ENCODE measurements at regions of chr17 and their contacts with region 1.

Region 1: GRCh38 chr17:51371732-51372151 is 111.4 kb downstream of the UTP18 start:
- DNase-seq: peak in 6 of 9 experiments; percentile 17 to 71 (median 31)
- ATAC-seq: peak; percentile 38
- H3K4me3 ChIP-seq: no peak overlapping the region
- H3K4me3 Mint-ChIP-seq: no peak overlapping the region
- H3K27ac ChIP-seq: no peak overlapping the region
- H3K27ac Mint-ChIP-seq: no peak overlapping the region
- H3K4me1 ChIP-seq: peaks cover 10% of the 10 kb centered on the region
- H3K4me1 Mint-ChIP-seq: peaks cover 8% of the 10 kb centered on the region
- H3K27me3 ChIP-seq: peaks cover 0 to 4% of the 10 kb centered on the region in 2 experiments
- H3K27me3 Mint-ChIP-seq: peaks cover 4% of the 10 kb centered on the region
- CTCF ChIP-seq: peak; percentile 49

Region 2: DNA sequence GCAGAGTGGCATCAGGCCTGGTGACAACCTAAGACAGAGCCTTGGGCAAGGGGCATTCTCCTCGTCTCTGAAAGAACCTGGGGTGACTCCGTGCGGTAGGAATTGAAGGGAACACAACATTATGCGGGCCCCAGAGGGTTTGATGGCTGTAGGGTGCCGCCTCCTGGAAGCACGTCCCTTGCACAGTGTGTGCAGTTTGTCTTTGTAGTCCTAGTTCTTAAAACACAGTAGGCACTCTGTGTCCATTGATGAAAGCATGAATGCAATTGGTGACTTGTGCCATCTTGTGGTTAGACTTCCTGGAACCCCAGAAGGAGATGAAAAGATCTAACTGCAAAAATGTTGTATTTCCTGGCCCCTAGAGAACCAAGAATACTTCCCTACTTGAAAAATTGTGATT is 168.4 kb after region 1 on chr17:
- CTCF ChIA-PET with region 1: interaction called, 50 read pairs
- POLR2A ChIA-PET with region 1: no interaction called
- intact Hi-C with region 1: loop called (anchors 1 kb)
- DNase-seq: peak in 2 of 9 experiments; percentile 7 to 21
- ATAC-seq: no peak
- H3K4me3 ChIP-seq: no peak overlapping the region
- H3K4me3 Mint-ChIP-seq: no peak overlapping the region
- H3K27ac ChIP-seq: no peak overlapping the region
- H3K27ac Mint-ChIP-seq: no peak overlapping the region
- H3K4me1 ChIP-seq: no peaks in the 10 kb centered on the region
- H3K4me1 Mint-ChIP-seq: peaks cover 11% of the 10 kb centered on the region
- H3K27me3 ChIP-seq: no peaks in the 10 kb centered on the region
- H3K27me3 Mint-ChIP-seq: no peaks in the 10 kb centered on the region
- CTCF ChIP-seq: no peak

Region 3: GRCh38 chr17:51640108-51640622 is 268.4 kb after region 1 on chr17:
- CTCF ChIA-PET with region 1: interaction called, 15 read pairs
- POLR2A ChIA-PET with region 1: no interaction called
- intact Hi-C with region 1: loop called in 1 of 2 experiments (anchors 2 kb)
- DNase-seq: peak in 3 of 9 experiments; percentile 1 to 15 (median 2)
- ATAC-seq: no peak
- H3K4me3 ChIP-seq: no peak overlapping the region
- H3K4me3 Mint-ChIP-seq: no peak overlapping the region
- H3K27ac ChIP-seq: no peak overlapping the region
- H3K27ac Mint-ChIP-seq: no peak overlapping the region
- H3K4me1 ChIP-seq: no peaks in the 10 kb centered on the region
- H3K4me1 Mint-ChIP-seq: no peaks in the 10 kb centered on the region
- H3K27me3 ChIP-seq: peaks cover 0 to 3% of the 10 kb centered on the region in 2 experiments
- H3K27me3 Mint-ChIP-seq: peaks cover 10% of the 10 kb centered on the region
- CTCF ChIP-seq: no peak

Region 4: DNA sequence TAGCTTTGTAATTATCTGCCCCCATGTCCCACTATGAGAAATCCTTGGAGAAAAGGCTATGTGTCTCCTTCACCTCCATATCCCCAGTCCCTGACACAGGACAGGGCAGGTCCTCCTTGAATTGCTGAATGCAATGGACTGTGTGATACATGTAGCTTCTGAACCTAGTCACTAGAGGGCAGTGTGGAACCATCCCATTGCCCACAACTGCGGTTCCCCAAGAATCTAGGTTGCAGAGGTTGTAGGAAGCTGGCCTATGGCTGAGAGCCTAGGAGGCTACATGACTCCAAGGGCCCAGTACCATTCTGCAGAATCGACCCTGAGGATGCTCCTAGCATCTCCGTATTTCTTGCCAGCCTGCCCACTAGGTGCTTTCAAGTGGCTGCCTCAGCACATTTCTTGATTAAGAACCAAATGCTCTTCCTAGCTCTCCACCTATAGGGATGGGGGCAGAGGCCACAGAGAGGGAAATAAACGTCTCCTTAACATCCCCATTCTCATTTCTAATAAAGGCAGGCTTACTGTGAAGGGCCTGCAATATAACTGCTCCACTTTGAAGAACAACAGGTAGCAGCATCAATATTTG is 392.7 kb after region 1 on chr17:
- CTCF ChIA-PET with region 1: no interaction called
- POLR2A ChIA-PET with region 1: no interaction called
- intact Hi-C with region 1: loop called in 1 of 2 experiments (anchors 10 kb)
- DNase-seq: peak in 7 of 9 experiments; percentile 1 to 55 (median 11)
- ATAC-seq: peak; percentile 44
- H3K4me3 ChIP-seq: no peak overlapping the region
- H3K4me3 Mint-ChIP-seq: no peak overlapping the region
- H3K27ac ChIP-seq: no peak overlapping the region
- H3K27ac Mint-ChIP-seq: no peak overlapping the region
- H3K4me1 ChIP-seq: no peaks in the 10 kb centered on the region
- H3K4me1 Mint-ChIP-seq: no peaks in the 10 kb centered on the region
- H3K27me3 ChIP-seq: no peaks in the 10 kb centered on the region
- H3K27me3 Mint-ChIP-seq: peaks cover 35% of the 10 kb centered on the region
- CTCF ChIP-seq: peak; percentile 62

Region 5: GRCh38 chr17:52106638-52107261 is 735.0 kb after region 1 on chr17:
- CTCF ChIA-PET with region 1: interaction called, 3 read pairs
- POLR2A ChIA-PET with region 1: no interaction called
- intact Hi-C with region 1: loop called in 1 of 2 experiments (anchors 5 kb)
- DNase-seq: peak in 5 of 9 experiments; percentile 4 to 27 (median 13)
- ATAC-seq: no peak
- H3K4me3 ChIP-seq: no peak overlapping the region
- H3K4me3 Mint-ChIP-seq: no peak overlapping the region
- H3K27ac ChIP-seq: no peak overlapping the region
- H3K27ac Mint-ChIP-seq: no peak overlapping the region
- H3K4me1 ChIP-seq: no peaks in the 10 kb centered on the region
- H3K4me1 Mint-ChIP-seq: no peaks in the 10 kb centered on the region
- H3K27me3 ChIP-seq: no peaks in the 10 kb centered on the region
- H3K27me3 Mint-ChIP-seq: peaks cover 7% of the 10 kb centered on the region
- CTCF ChIP-seq: peak; percentile 57